CD8-positive, alpha-beta T cell (primary cell): ENCODE measurements at regions of chr12 and their contacts with region 1.

Region 1: GRCh38 chr12:8026291-8026900 is 6.1 kb upstream of the FOXJ2 start:
- DNase-seq: peak; percentile 90 to 99 (median 94)
- ATAC-seq: peak; percentile 89
- H3K4me3 ChIP-seq: peak overlapping the region; percentile 84 to 93
- H3K4me3 Mint-ChIP-seq: peak overlapping the region; percentile 95
- H3K27ac ChIP-seq: peak overlapping the region; percentile 97 to 100
- H3K27ac Mint-ChIP-seq: peak overlapping the region; percentile 100
- H3K4me1 ChIP-seq: peaks cover 6% of the 10 kb centered on the region
- H3K4me1 Mint-ChIP-seq: peaks cover 21% of the 10 kb centered on the region
- H3K27me3 ChIP-seq: no peaks in the 10 kb centered on the region
- H3K27me3 Mint-ChIP-seq: no peaks in the 10 kb centered on the region
- CTCF ChIP-seq: no peak

Region 2: GRCh38 chr12:7970475-7971252 is 55.7 kb before region 1 on chr12:
- CTCF ChIA-PET with region 1: no interaction called
- POLR2A ChIA-PET with region 1: interaction called, 3 read pairs
- intact Hi-C with region 1: loop called (anchors 1 to 2 kb)
- DNase-seq: peak; percentile 61 to 96 (median 88)
- ATAC-seq: peak; percentile 87
- H3K4me3 ChIP-seq: peak overlapping the region; percentile 67 to 90
- H3K4me3 Mint-ChIP-seq: peak overlapping the region; percentile 83
- H3K27ac ChIP-seq: peak overlapping the region; percentile 90 to 94
- H3K27ac Mint-ChIP-seq: peak overlapping the region; percentile 96
- H3K4me1 ChIP-seq: peaks cover 15% of the 10 kb centered on the region
- H3K4me1 Mint-ChIP-seq: peaks cover 27% of the 10 kb centered on the region
- H3K27me3 ChIP-seq: no peaks in the 10 kb centered on the region
- H3K27me3 Mint-ChIP-seq: no peaks in the 10 kb centered on the region
- CTCF ChIP-seq: no peak

Region 3: GRCh38 chr12:8011331-8011730 is 15.1 kb before region 1 on chr12:
- CTCF ChIA-PET with region 1: no interaction called
- POLR2A ChIA-PET with region 1: no interaction called
- intact Hi-C with region 1: no loop called
- DNase-seq: no peak
- ATAC-seq: no peak
- H3K4me3 ChIP-seq: no peak overlapping the region
- H3K4me3 Mint-ChIP-seq: no peak overlapping the region
- H3K27ac ChIP-seq: no peak overlapping the region
- H3K27ac Mint-ChIP-seq: no peak overlapping the region
- H3K4me1 ChIP-seq: no peaks in the 10 kb centered on the region
- H3K4me1 Mint-ChIP-seq: no peaks in the 10 kb centered on the region
- H3K27me3 ChIP-seq: no peaks in the 10 kb centered on the region
- H3K27me3 Mint-ChIP-seq: peaks cover 19% of the 10 kb centered on the region
- CTCF ChIP-seq: no peak

Region 4: GRCh38 chr12:8038659-8039114 is 12.3 kb after region 1 on chr12:
- CTCF ChIA-PET with region 1: interaction called, 41 read pairs
- POLR2A ChIA-PET with region 1: interaction called, 16 read pairs
- intact Hi-C with region 1: no loop called
- DNase-seq: peak in 5 of 9 experiments; percentile 31 to 56 (median 40)
- ATAC-seq: peak; percentile 50
- H3K4me3 ChIP-seq: peak overlapping the region; percentile 10 to 45
- H3K4me3 Mint-ChIP-seq: peak overlapping the region; percentile 67
- H3K27ac ChIP-seq: no peak overlapping the region
- H3K27ac Mint-ChIP-seq: peak overlapping the region; percentile 60
- H3K4me1 ChIP-seq: peaks cover 59% of the 10 kb centered on the region
- H3K4me1 Mint-ChIP-seq: peaks cover 57% of the 10 kb centered on the region
- H3K27me3 ChIP-seq: no peaks in the 10 kb centered on the region
- H3K27me3 Mint-ChIP-seq: no peaks in the 10 kb centered on the region
- CTCF ChIP-seq: no peak

Region 5: GRCh38 chr12:8123124-8123912 is 96.9 kb after region 1 on chr12 and contains the start of gene CLEC4A:
- CTCF ChIA-PET with region 1: no interaction called
- POLR2A ChIA-PET with region 1: no interaction called
- intact Hi-C with region 1: no loop called
- DNase-seq: no peak
- ATAC-seq: no peak
- H3K4me3 ChIP-seq: no peak within 1 kb of the TSS
- H3K4me3 Mint-ChIP-seq: no peak within 1 kb of the TSS
- H3K27ac ChIP-seq: no peak within 1 kb of the TSS
- H3K27ac Mint-ChIP-seq: peak within 1 kb of the TSS; percentile 46
- H3K4me1 ChIP-seq: peaks cover 7% of the 10 kb centered on the region
- H3K4me1 Mint-ChIP-seq: peaks cover 15% of the 10 kb centered on the region
- H3K27me3 ChIP-seq: no peaks in the 10 kb centered on the region
- H3K27me3 Mint-ChIP-seq: no peaks in the 10 kb centered on the region
- CTCF ChIP-seq: no peak
- total RNA-seq, gene CLEC4A: 0.75 to 0.81 TPM